H1 (cell line): ENCODE measurements at regions of chr6 and their contacts with region 1.

Region 1: DNA sequence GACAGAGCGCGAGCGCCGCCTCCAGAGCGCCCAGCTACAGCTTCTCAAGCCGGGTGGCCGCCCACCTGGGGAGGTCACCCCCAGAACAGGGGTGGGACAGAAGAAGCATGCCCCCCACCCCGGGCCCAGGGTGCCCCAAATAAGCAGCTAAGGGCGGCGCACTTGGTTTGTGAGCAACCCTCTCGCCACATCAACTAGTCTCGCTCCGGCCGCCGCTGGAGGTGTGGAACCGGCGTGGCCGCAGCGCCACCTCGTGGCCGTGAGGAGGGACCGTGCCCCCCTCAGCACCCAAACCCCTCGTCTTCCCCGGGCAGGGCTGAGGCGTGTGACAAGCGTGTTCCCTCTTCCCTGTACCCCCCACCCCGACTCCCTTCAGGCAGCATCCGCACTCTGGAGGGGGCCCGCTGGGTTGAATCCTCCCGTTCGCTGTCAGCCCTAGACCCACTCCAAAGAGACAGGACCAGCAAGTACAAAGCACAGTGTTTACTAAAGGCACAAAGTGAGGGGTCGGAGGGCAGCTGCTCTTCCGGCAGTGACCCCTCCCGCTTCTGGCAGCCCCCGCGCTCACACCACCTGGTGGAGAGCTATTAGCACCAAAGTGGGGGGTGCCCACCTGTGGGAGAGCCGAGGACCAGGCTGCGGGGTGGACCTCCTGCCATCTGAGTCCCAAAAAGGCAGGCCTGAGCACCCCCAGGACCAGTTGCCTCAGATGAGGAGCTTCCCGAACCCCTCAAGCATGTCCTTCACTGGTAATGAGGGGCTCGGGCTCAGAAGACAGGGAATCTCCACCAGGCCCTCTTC is 45.4 kb downstream of the MDFI start:
- DNase-seq: peak in 1 of 2 experiments; percentile 91
- H3K4me3 ChIP-seq: peak overlapping the region in 3 of 4 experiments; percentile 11 to 57 (median 29); a peak in 5 of 8 replicates
- H3K27ac ChIP-seq: no peak overlapping the region
- H3K4me1 ChIP-seq: peaks cover 5 to 41% (median 18%) of the 10 kb centered on the region in 4 experiments
- H3K27me3 ChIP-seq: peaks cover 0 to 12% (median 5%) of the 10 kb centered on the region in 4 experiments; a peak in 4 of 7 replicates
- CTCF ChIP-seq: peak in 2 of 3 experiments; percentile 95; a peak in 3 of 4 replicates
- EP300 ChIP-seq: no peak
- POLR2A ChIP-seq: no peak
- RAD21 ChIP-seq: peak; percentile 92

Region 2: GRCh38 chr6:41424370-41425058 is 259.2 kb before region 1 on chr6:
- CTCF ChIA-PET with region 1: interaction called, 30 read pairs
- POLR2A ChIA-PET with region 1: no interaction called
- DNase-seq: peak in 1 of 2 experiments; percentile 97
- H3K4me3 ChIP-seq: no peak overlapping the region
- H3K27ac ChIP-seq: no peak overlapping the region
- H3K4me1 ChIP-seq: peaks cover 3 to 29% (median 8%) of the 10 kb centered on the region in 4 experiments
- H3K27me3 ChIP-seq: peaks cover 24 to 62% (median 54%) of the 10 kb centered on the region in 4 experiments
- CTCF ChIP-seq: peak; percentile 34 to 88 (median 85)
- EP300 ChIP-seq: no peak
- POLR2A ChIP-seq: no peak
- RAD21 ChIP-seq: peak; percentile 72 to 82

Region 3: DNA sequence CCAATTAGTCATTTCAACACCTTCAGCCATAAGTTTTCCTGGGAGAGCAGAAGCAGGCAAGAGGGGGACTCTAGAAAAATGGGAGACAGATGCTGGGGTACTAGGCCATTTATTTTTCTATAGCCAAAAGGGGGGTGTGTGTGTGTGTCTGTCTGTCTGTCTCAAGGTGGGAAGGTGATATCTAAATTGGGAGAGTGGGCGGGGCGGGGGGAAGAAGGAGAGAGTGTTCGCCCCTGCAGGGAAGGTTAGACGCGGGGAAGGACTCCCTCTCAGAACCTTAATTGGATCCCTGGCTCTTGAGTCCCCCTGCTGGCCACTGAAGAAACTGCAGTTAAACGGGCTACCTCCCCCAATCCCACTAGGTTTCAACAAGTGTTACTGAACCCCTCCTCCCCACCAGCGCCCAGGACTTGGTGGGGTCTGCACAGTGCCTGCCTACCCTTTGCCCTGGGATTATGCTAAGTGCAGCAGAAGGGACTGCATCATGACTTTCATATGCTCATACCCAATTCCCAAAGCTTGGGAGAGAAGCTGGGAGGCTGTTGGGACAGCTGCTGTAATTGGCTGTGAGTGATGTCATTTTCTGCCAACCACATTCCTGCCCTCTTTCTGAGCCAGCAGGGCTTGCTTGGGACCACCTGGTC is 91.7 kb before region 1 on chr6:
- CTCF ChIA-PET with region 1: interaction called, 299 read pairs
- POLR2A ChIA-PET with region 1: interaction called, 3 read pairs
- DNase-seq: peak in 1 of 2 experiments; percentile 97
- H3K4me3 ChIP-seq: no peak overlapping the region
- H3K27ac ChIP-seq: no peak overlapping the region
- H3K4me1 ChIP-seq: peaks cover 3 to 17% (median 9%) of the 10 kb centered on the region in 4 experiments
- H3K27me3 ChIP-seq: no peaks in the 10 kb centered on the region
- CTCF ChIP-seq: peak in 2 of 3 experiments; percentile 90 to 91; a peak in 3 of 4 replicates
- EP300 ChIP-seq: no peak
- POLR2A ChIP-seq: no peak
- RAD21 ChIP-seq: peak; percentile 95 to 96

Region 4: DNA sequence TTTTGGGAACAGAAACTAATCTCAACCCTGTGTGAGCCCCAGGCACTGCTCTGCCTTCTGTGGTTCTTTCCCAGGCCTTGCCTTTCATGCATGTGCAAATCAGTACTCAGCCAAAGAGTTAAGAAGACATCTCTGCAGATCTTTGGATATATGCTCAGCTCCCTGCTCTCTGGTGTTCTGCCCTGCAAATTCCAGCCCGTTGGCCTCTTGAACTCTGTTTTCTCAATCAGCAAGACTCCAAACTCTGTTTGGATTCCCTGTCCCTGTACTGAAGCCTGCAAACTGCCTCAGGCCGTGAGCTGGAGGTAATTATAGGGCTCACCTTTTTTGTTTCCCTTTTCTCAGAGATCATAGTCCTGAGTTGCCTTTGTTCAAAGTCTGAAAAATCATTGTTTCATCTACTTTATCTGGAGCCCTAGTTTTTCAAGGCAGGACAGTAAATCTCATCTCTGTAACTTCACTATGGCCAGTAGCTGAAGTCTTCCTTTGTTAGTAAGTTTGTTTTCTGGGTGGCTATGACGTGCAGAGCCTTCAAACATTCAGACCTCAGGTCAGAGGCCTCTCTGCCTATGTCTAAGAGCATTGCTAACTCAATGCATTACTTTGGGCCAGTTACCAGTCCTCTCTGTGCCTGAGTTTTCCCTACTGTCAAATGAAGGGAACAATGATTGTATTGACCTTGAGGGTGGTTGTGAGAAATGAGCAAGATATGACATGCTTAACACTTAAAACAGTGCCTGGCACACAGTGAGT is 61.3 kb before region 1 on chr6:
- CTCF ChIA-PET with region 1: interaction called, 11 read pairs
- POLR2A ChIA-PET with region 1: no interaction called
- DNase-seq: no peak
- H3K4me3 ChIP-seq: no peak overlapping the region
- H3K27ac ChIP-seq: no peak overlapping the region
- H3K4me1 ChIP-seq: no peaks in the 10 kb centered on the region; a peak in 2 of 7 replicates
- H3K27me3 ChIP-seq: no peaks in the 10 kb centered on the region
- CTCF ChIP-seq: no peak
- EP300 ChIP-seq: no peak
- POLR2A ChIP-seq: no peak
- RAD21 ChIP-seq: no peak

Region 5: DNA sequence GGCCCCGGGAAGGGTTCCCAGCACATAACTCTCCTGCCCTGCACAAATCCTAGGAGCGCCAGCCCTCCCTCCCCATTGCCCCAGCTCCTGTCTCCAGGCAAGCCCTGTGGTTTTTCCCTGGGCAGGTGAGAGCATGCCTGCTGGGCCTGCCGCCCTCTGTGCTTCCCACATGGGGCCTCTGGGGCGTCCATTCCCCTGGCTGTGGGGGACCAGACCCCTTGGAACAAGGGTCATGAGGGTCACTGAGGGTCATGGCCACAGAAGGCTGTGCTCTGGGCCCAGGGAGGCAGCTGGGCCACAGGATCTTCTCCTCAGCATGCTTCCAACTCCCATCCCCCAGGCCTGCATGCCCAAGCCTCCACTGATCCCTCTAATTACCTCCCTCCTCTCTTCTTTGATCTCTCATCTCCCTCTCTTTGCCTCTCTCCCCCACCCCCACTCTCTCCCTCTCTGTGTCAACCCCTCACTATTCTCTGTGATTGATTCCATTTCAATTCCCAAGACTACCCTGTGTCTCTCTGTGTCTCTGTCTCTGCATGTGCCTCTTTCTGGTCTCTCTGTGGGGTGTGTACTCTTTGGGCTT is 39.3 kb before region 1 on chr6:
- CTCF ChIA-PET with region 1: interaction called, 32 read pairs
- POLR2A ChIA-PET with region 1: interaction called, 4 read pairs
- DNase-seq: peak in 1 of 2 experiments; percentile 55
- H3K4me3 ChIP-seq: 0 out of 8 replicates have a peak overlapping the region, but pooled peaks of 2 of the 4 experiments have one; percentile 9 to 14
- H3K27ac ChIP-seq: no peak overlapping the region
- H3K4me1 ChIP-seq: peaks cover 8 to 52% (median 37%) of the 10 kb centered on the region in 4 experiments
- H3K27me3 ChIP-seq: peaks cover 0 to 26% (median 13%) of the 10 kb centered on the region in 4 experiments; a peak in 5 of 7 replicates
- CTCF ChIP-seq: no peak
- EP300 ChIP-seq: no peak
- POLR2A ChIP-seq: no peak
- RAD21 ChIP-seq: no peak

Region 6: DNA sequence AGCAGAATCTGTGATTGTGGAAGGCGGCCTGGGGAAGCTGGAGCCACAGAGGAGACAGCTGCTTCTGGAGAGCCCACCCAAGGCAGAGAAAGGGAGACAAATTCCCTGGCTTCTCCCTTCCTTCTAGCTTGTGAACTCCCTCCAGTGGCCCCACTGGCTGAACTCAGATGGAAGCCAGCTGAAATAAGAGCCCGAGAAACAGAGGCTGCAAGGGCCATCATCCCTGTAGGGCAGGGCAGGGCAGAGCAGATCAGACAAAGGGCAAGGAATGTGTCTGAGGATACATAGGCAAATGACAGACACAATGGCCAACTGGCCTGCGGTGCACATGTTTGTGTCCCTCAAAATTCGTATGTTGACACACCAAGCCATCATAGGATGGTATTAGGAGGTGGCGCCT is 20.1 kb before region 1 on chr6:
- CTCF ChIA-PET with region 1: interaction called, 16 read pairs
- POLR2A ChIA-PET with region 1: no interaction called
- DNase-seq: no peak
- H3K4me3 ChIP-seq: no peak overlapping the region
- H3K27ac ChIP-seq: no peak overlapping the region
- H3K4me1 ChIP-seq: peaks cover 0 to 3% (median under 1%) of the 10 kb centered on the region in 4 experiments; a peak in 3 of 7 replicates
- H3K27me3 ChIP-seq: no peaks in the 10 kb centered on the region
- CTCF ChIP-seq: no peak
- EP300 ChIP-seq: no peak
- POLR2A ChIP-seq: no peak
- RAD21 ChIP-seq: no peak; a peak in 1 of 4 replicates

Region 7: DNA sequence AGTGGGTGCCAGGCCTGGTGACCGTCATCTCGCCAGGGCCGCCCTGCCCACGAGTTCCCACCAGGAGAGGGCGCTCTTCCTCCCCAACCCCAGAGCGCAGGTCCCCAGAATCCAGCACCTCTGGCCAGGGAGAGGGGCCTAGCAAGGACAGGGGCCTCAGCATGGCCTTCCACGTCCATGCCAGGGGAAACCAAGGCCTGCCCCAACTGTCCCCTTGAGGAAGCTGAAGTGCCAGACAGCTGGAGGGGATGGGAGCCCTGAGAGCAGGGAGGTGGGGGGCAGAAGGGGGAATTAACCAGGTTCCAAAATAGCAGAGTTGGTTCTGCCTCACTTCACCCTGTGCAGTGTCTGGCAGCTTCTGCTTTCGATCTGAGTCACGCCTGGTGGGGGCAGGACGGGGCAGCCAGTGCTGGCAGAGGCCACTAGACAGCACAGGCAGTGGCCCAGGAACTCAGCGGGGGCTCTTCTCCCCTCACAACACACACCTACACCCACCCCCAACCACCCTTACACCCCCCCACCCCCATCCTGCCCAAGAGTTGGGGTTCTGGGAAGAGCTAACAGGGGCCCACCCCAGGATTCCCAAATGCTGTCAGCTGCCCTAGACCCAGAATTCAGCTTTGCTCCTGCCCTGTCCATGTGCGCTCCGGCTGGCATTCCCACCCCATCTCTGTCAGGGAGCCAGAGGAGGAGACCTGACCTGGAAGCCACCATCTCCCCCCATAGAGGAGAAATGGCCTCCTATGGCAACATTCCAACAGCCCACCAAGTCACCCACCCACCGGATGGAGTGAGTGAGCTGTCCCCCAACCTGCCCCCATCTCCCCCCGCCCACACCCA is 22.5 kb after region 1 on chr6:
- CTCF ChIA-PET with region 1: interaction called, 181 read pairs
- POLR2A ChIA-PET with region 1: no interaction called
- DNase-seq: peak; percentile 56 to 92
- H3K4me3 ChIP-seq: no peak overlapping the region
- H3K27ac ChIP-seq: no peak overlapping the region
- H3K4me1 ChIP-seq: peaks cover 0 to 8% (median 3%) of the 10 kb centered on the region in 4 experiments; a peak in 4 of 7 replicates
- H3K27me3 ChIP-seq: no peaks in the 10 kb centered on the region; a peak in 1 of 7 replicates
- CTCF ChIP-seq: peak in 2 of 3 experiments; percentile 92 to 97; a peak in 3 of 4 replicates
- EP300 ChIP-seq: no peak
- POLR2A ChIP-seq: no peak
- RAD21 ChIP-seq: peak; percentile 68 to 81